GM10248 (cell line): ENCODE measurements at regions of chr6 and their contacts with region 1.

Region 1: GRCh38 chr6:14129575-14129974 is 12.0 kb downstream of the CD83 start:
- DNase-seq: peak; percentile 51
- CTCF ChIP-seq: peak; percentile 43

Region 2: GRCh38 chr6:14117158-14118090 is 12.2 kb before region 1 on chr6 and contains the start of gene CD83:
- CTCF ChIA-PET with region 1: interaction called, 11 read pairs
- POLR2A ChIA-PET with region 1: interaction called, 4 read pairs
- DNase-seq: peak; percentile 92
- CTCF ChIP-seq: peak; percentile 29

Region 3: DNA sequence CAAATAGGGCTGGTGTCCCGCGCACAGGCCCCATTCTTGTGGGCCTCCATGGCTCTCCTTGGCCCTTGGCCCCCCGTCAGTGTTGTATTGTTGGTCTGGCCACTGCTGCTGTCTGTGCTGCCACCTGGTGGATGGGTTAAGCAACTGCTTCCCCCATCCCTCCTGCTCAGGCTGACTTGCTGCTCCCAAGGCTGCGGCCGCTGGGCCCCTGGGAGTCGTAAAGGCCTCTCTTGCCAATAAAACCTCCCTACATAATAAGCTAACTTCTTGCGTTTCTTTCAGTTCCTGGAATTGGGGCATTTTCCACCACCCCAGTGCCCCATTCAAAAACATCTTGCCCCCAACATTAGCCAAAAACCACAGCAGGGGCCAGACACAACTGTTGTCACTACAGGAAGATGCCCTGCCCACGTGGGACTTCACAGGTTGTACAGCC is 15.1 kb after region 1 on chr6:
- CTCF ChIA-PET with region 1: interaction called, 35 read pairs
- POLR2A ChIA-PET with region 1: no interaction called
- DNase-seq: peak; percentile 87
- CTCF ChIP-seq: peak; percentile 92